CD8-positive, alpha-beta memory T cell (primary cell): ENCODE measurements at regions of chr12 and their contacts with region 1.

Region 1: GRCh38 chr12:55973598-55974307 is at the start of gene RAB5B:
- DNase-seq: peak; percentile 94 to 99 (median 98)
- H3K4me3 ChIP-seq: peak within 1 kb of the TSS; percentile 76
- H3K4me3 Mint-ChIP-seq: no peak within 1 kb of the TSS
- H3K27ac ChIP-seq: peak within 1 kb of the TSS; percentile 87
- H3K27ac Mint-ChIP-seq: no peak within 1 kb of the TSS
- H3K4me1 ChIP-seq: peaks cover 36% of the 10 kb centered on the region
- H3K4me1 Mint-ChIP-seq: peaks cover 15 to 27% (median 24%) of the 10 kb centered on the region in 3 donors
- H3K27me3 ChIP-seq: no peaks in the 10 kb centered on the region
- H3K27me3 Mint-ChIP-seq: no peaks in the 10 kb centered on the region
- total RNA-seq, gene RAB5B: 36.6 to 38.3 TPM

Region 2: DNA sequence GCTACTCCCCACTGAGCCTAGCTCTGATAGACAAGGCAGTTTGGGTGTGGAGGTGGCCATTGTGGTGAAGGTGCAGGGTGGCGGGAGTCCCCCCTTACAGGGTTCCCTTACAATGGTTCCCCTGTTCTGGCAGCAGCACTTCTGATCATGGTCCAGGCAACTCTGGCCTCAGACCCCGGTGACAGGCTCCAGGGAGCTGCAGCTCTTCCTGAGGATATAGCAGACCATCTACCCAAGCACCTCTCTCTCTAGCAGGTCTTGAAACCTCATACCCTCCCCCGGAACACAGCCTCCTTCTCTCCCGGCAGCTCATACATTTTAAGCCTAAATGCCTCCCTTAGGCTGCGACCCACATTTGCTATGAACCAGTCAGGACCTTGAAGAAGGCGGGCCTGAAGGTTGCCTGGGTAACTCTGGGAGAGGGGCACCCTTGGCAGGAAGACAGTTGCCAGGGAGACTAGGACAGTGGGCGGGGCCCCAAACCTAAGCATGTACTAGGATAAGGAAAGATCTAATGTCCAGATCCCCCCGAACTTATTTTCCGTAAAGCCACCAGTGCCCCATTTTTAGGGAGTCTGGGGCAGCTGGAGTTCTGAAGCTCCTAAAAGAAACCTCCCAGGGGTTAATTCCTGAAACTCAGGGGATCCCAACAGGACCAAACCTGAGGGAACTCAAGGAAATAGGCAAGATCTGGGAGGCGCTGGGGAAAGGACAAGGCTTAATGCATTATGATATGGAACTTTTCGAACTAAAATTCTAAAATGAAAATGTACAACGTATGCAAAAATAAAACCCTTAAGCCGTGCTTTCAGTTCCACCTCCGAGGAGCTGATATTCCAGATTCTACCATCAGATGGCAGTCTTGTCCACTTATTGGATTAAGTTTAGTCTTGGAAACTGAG is 235.4 kb before region 1 on chr12:
- CTCF ChIA-PET with region 1: interaction called, 5 read pairs
- POLR2A ChIA-PET with region 1: interaction called, 12 read pairs
- DNase-seq: peak; percentile 48 to 85 (median 75)
- H3K4me3 ChIP-seq: peak overlapping the region; percentile 95
- H3K4me3 Mint-ChIP-seq: peak overlapping the region; percentile 81 to 96 (median 85)
- H3K27ac ChIP-seq: peak overlapping the region; percentile 82
- H3K27ac Mint-ChIP-seq: peak overlapping the region; percentile 91 to 98 (median 92)
- H3K4me1 ChIP-seq: peaks cover 25% of the 10 kb centered on the region
- H3K4me1 Mint-ChIP-seq: peaks cover 26 to 38% (median 27%) of the 10 kb centered on the region in 3 donors
- H3K27me3 ChIP-seq: no peaks in the 10 kb centered on the region
- H3K27me3 Mint-ChIP-seq: no peaks in the 10 kb centered on the region

Region 3: GRCh38 chr12:55829967-55830600 is 143.7 kb before region 1 on chr12:
- CTCF ChIA-PET with region 1: no interaction called
- POLR2A ChIA-PET with region 1: interaction called, 17 read pairs
- DNase-seq: peak in 3 of 5 donors; percentile 8 to 63 (median 42)
- H3K4me3 ChIP-seq: peak overlapping the region; percentile 96
- H3K4me3 Mint-ChIP-seq: peak overlapping the region; percentile 97 to 99 (median 98)
- H3K27ac ChIP-seq: peak overlapping the region; percentile 79
- H3K27ac Mint-ChIP-seq: peak overlapping the region; percentile 84 to 98 (median 96)
- H3K4me1 ChIP-seq: peaks cover 50% of the 10 kb centered on the region
- H3K4me1 Mint-ChIP-seq: peaks cover 46 to 69% (median 54%) of the 10 kb centered on the region in 3 donors
- H3K27me3 ChIP-seq: no peaks in the 10 kb centered on the region
- H3K27me3 Mint-ChIP-seq: no peaks in the 10 kb centered on the region

Region 4: DNA sequence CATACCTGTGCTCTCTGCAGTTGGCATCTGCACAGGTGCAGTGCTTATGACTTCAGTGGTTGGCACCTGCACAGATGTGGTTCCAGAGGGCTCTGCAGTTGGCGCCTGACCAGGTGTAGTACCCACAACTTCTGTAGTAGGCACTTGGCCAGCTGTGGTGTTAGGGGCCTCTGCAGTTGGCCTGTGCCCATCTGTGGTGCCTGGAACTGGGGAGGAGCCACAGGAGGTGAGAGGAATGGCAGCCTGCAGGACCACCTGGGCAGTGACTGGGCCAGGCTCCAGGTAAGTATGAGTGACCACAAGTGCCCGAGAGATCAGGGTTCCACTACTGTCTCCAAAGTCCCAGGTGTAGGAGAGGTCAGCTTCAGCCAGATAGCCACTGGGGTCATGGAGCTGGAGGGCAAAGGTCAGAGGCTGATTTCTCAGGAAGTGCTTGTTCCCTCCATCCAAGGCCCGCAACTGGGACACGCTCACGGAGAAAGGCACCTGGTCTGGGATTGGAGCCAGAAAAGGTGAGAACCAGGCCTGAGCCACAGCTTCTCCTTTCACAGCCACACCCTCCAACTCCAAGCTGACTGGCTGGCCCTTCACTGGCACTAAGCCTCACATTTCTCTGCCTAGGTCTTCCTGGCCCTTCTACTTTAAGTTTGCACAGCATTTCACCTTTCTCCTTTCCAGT is 16.4 kb before region 1 on chr12:
- CTCF ChIA-PET with region 1: interaction called, 5 read pairs
- POLR2A ChIA-PET with region 1: interaction called, 12 read pairs
- DNase-seq: no peak
- H3K4me3 ChIP-seq: no peak overlapping the region
- H3K4me3 Mint-ChIP-seq: no peak overlapping the region
- H3K27ac ChIP-seq: no peak overlapping the region
- H3K27ac Mint-ChIP-seq: peak overlapping the region; percentile 70 to 96 (median 82)
- H3K4me1 ChIP-seq: peaks cover 11% of the 10 kb centered on the region
- H3K4me1 Mint-ChIP-seq: peaks cover 8 to 18% (median 11%) of the 10 kb centered on the region in 3 donors
- H3K27me3 ChIP-seq: no peaks in the 10 kb centered on the region
- H3K27me3 Mint-ChIP-seq: no peaks in the 10 kb centered on the region

Region 5: GRCh38 chr12:56104109-56104814 is 130.5 kb after region 1 on chr12 and contains the start of gene PA2G4:
- CTCF ChIA-PET with region 1: interaction called, 3 read pairs
- POLR2A ChIA-PET with region 1: interaction called, 11 read pairs
- DNase-seq: peak; percentile 90 to 98 (median 96)
- H3K4me3 ChIP-seq: peak within 1 kb of the TSS; percentile 79
- H3K4me3 Mint-ChIP-seq: peak within 1 kb of the TSS; percentile 97 to 100 (median 98)
- H3K27ac ChIP-seq: peak within 1 kb of the TSS; percentile 82
- H3K27ac Mint-ChIP-seq: peak within 1 kb of the TSS; percentile 95 to 99 (median 98)
- H3K4me1 ChIP-seq: peaks cover 40% of the 10 kb centered on the region
- H3K4me1 Mint-ChIP-seq: peaks cover 61 to 68% (median 62%) of the 10 kb centered on the region in 3 donors
- H3K27me3 ChIP-seq: no peaks in the 10 kb centered on the region
- H3K27me3 Mint-ChIP-seq: no peaks in the 10 kb centered on the region
- total RNA-seq, gene PA2G4: 468 to 504 TPM

Region 6: GRCh38 chr12:56129207-56129941 is 155.6 kb after region 1 on chr12:
- CTCF ChIA-PET with region 1: no interaction called
- POLR2A ChIA-PET with region 1: no interaction called
- DNase-seq: peak; percentile 65 to 87 (median 78)
- H3K4me3 ChIP-seq: peak overlapping the region; percentile 90
- H3K4me3 Mint-ChIP-seq: peak overlapping the region; percentile 86 to 99 (median 98)
- H3K27ac ChIP-seq: peak overlapping the region; percentile 90
- H3K27ac Mint-ChIP-seq: peak overlapping the region; percentile 90 to 99 (median 98)
- H3K4me1 ChIP-seq: peaks cover 59% of the 10 kb centered on the region
- H3K4me1 Mint-ChIP-seq: peaks cover 56 to 68% (median 65%) of the 10 kb centered on the region in 3 donors
- H3K27me3 ChIP-seq: no peaks in the 10 kb centered on the region
- H3K27me3 Mint-ChIP-seq: peaks cover 0 to 2% of the 10 kb centered on the region in 2 donors